Prostate gland (tissue), 2 donors: ENCODE measurements at regions of chr3 and their contacts with region 1.

Region 1: GRCh38 chr3:52845691-52846431 is 11.0 kb upstream of the MUSTN1 start:
- DNase-seq: no peak
- H3K4me3 ChIP-seq: no peak overlapping the region
- H3K27ac ChIP-seq: peak overlapping the region; percentile 57 to 66
- H3K4me1 ChIP-seq: no peaks in the 10 kb centered on the region
- H3K27me3 ChIP-seq: no peaks in the 10 kb centered on the region
- CTCF ChIP-seq: no peak
- POLR2A ChIP-seq: no peak

Region 2: DNA sequence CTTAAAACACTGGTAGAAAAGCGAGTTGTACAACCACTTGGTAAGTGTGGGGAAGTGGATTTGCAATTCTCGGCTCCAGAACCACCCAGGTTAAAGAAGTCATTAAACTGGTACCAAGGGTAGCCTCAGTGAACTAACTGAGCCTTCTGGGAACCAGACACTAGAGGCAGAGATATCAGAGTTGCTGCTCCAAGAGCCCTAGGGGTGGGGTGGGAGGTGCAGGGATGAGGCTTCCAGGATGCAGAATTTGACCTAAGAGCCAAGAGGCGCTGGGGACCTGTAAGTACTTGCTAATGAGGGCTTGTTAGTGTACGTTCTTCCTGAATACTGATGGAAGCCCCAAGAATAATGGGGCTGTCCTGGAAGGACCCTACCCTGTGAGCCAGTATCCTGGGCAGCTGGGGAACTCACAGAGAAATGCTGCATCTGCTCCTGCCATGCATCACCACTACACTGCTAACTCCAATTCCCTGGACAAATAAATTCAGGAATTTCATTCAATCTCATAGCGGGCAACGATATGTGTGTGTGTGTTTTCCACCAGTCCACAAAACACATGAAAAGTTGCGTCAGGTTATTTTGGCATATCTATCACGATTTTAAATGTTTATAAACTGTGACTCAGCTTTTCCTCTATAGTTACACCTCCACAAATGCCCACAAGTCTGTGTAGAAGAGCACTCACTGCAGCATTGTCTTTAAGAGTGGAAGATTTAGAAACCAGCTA is 27.7 kb after region 1 on chr3:
- intact Hi-C with region 1: no loop called
- DNase-seq: no peak
- H3K4me3 ChIP-seq: no peak overlapping the region
- H3K27ac ChIP-seq: no peak overlapping the region
- H3K4me1 ChIP-seq: no peaks in the 10 kb centered on the region
- H3K27me3 ChIP-seq: no peaks in the 10 kb centered on the region
- CTCF ChIP-seq: no peak
- POLR2A ChIP-seq: no peak

Region 3: GRCh38 chr3:52897130-52898122 is 51.6 kb after region 1 on chr3 and contains the start of gene STIMATE:
- intact Hi-C with region 1: loop called (anchors 5 kb)
- DNase-seq: peak; percentile 88
- H3K4me3 ChIP-seq: peak within 1 kb of the TSS; percentile 57 to 70
- H3K27ac ChIP-seq: peak within 1 kb of the TSS; percentile 55 to 63
- H3K4me1 ChIP-seq: peaks cover 8% of the 10 kb centered on the region
- H3K27me3 ChIP-seq: no peaks in the 10 kb centered on the region
- CTCF ChIP-seq: peak in 1 of 4 experiments; percentile 6
- POLR2A ChIP-seq: peak; percentile 73
- total RNA-seq, gene STIMATE: 7.2 to 20.5 TPM

Region 4: DNA sequence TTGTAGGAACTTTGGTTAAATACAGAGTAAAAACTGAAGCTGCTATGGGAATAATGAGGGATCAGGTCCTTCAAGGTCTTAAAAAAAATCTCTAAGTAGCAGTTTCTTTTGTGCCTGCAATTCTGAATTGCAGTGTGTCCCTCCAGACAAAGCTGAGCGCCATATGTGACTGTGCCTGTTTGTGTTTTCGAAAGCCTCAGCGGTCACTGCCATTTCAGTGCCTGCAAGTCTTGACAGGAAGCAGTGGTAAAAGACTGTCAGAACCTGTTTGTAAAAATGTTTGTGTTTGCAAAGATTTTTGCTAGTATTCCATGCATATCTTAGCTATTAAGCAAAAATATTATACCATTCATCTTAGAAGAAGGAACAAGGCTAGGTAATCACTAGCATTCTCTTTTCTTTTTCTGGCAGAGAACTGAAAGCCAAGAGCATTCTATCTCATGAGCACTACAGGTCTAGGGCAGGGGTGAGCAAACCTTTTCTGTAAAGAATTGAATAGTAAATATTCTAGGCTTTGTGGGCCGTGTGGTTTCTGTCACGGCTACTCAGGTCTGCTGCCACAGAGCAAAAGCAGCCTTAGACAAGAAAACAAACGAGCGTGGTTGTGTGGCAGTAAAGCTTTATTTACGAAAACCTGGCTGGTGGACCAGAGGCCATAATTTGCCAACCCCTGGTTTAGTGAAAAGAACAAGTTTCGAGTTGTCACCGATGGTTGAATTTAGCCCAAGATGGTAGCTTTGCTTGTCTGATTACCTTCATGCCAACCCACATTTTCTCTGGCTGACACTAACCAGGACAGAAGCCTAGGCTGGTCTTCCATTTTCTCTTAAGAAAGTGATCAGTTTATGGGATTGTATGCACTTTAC is 782.9 kb after region 1 on chr3:
- intact Hi-C with region 1: no loop called
- DNase-seq: peak; percentile 50
- H3K4me3 ChIP-seq: no peak overlapping the region
- H3K27ac ChIP-seq: peak overlapping the region; percentile 14 to 41
- H3K4me1 ChIP-seq: no peaks in the 10 kb centered on the region
- H3K27me3 ChIP-seq: no peaks in the 10 kb centered on the region
- CTCF ChIP-seq: no peak
- POLR2A ChIP-seq: no peak